IMR-90 (cell line): ENCODE measurements at regions of chr6 and their contacts with region 1.

Region 1: DNA sequence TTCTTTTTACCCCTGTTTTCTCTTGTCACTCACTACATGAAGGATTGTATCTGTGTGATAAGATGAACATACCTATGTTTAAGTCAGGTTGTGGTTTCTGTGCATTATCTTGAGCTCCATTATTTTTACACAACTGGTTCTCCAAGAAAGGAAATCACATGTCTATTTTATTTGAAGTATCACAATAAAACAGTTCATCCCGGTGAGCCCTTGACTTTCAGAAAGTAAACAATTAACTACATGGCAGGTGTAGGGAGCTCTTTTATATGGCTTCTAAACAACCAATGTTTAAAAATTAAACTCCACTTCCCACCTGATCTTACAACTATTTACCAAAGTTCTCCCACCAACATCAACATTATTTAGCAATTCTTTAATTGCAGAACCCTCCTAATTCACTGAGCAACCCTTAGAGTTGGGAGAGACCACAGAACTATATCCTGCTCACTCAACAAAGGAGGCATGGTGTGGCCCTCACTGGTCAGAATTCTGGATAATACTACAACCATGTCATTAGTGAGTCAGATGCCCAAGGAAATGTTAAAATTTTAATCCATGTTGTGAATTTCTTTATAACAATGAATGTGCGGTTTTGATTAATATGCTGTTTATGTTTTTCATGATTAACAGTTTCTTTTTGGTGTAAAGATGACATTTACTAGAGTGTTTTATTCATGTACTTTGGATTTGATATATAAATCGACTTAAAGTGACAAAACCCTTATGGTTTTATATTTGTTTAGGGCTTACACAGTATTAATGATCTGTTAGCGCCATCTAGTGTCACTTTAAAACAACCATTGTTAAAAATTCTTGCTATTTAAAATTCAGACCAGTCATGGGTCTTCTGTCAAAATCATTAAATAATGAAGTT is 50.0 kb upstream of the SCGN start:
- DNase-seq: peak; percentile 67
- ATAC-seq: peak; percentile 62
- H3K4me3 ChIP-seq: no peak overlapping the region
- H3K27ac ChIP-seq: no peak overlapping the region
- H3K4me1 ChIP-seq: no peaks in the 10 kb centered on the region
- H3K27me3 ChIP-seq: no peaks in the 10 kb centered on the region
- CTCF ChIP-seq: peak; percentile 72
- POLR2A ChIP-seq: no peak
- RAD21 ChIP-seq: peak; percentile 71

Region 2: DNA sequence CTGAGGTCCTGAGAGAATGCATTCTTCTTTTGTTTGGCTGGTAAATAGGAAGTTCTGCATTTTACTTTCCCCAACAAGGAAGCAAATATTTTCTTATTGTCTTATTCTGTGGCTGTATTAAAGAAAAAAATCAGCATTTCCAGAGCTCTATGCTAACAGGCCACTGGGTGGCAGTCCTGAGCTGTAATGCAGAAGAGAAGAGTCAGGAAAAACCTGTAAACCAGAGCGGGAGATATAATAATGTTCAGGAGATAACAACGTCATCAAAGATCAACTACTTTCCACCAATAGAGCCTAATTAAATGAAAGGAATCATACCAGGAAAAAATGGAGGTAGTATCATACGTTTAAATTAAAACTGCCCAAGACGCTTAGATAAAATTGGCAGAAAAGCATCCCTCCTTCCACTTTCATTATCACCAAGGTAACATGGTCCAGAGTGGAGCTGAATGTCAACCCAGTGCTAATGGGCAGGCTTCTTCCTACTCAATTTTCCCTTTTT is 378.5 kb before region 1 on chr6:
- CTCF ChIA-PET with region 1: interaction called, 5 read pairs
- POLR2A ChIA-PET with region 1: no interaction called
- dilution Hi-C with region 1: no loop called
- in situ Hi-C with region 1: no loop called
- intact Hi-C with region 1: loop called (anchors 1 kb)
- DNase-seq: peak; percentile 73
- ATAC-seq: peak; percentile 96
- H3K4me3 ChIP-seq: no peak overlapping the region
- H3K27ac ChIP-seq: no peak overlapping the region
- H3K4me1 ChIP-seq: no peaks in the 10 kb centered on the region
- H3K27me3 ChIP-seq: no peaks in the 10 kb centered on the region
- CTCF ChIP-seq: peak; percentile 95
- POLR2A ChIP-seq: no peak
- RAD21 ChIP-seq: peak; percentile 94